ENCODE measurements at regions of chr17 and their contacts with region 1.

Region 1: DNA sequence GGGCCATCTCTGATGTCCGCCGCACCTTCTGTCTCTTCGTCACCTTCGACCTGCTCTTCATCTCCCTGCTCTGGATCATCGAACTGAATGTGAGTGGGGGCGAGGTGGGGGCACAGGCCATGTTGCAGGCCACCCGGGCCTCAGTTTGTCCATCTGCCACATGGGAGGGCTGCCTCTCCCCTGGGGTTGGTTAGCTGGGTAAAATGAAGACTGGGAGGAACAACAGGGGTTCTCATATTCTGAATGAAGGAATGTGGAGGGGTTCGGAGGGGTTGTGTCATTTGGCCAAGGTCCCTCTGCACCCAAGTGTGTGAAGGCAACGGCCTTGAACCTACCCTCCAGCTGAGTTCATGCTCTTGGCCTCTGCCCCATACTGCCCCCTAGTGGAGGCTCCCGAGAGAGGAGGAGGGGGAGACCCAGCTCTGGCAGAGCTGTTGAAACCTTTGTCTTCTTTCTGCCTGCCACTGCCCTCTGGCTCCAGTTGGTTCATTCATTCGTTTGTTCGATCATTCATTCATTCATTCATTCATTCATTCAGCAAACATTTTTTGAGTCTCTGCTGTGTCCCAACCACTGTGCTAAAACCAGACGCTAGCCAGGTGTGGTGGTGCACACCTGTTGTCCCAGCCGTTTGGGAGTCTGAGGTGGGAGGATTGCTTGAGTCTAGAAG is 11.4 kb upstream of the TCAP start:
- DNase-seq: peak; percentile 87
- ATAC-seq: peak; percentile 89
- H3K4me3 Mint-ChIP-seq: no peak overlapping the region
- H3K27ac Mint-ChIP-seq: peak overlapping the region; percentile 24
- H3K4me1 Mint-ChIP-seq: peaks cover 12% of the 10 kb centered on the region
- H3K27me3 Mint-ChIP-seq: no peaks in the 10 kb centered on the region

Region 2: DNA sequence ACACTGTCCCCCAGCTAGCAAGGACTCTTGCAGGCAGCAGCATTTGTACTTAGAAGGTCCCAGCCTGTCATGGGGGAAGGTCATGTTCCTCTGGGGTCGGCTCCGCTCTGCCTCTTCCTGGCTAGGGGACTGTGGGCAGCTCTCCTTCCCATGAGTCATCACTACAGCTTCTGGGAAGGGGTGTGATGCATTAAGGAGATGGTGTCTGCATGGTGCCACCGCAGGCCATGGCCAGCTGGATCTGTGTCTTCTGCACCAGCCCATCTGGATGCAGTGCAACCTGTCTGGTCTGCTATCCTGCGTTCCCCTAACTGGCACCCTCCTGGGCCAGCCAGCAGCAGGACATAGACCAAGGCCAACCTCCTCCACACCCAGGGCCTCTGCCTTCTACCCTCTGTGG is 10.5 kb before region 1 on chr17:
- CTCF ChIA-PET with region 1: interaction called, 50 read pairs
- DNase-seq: no peak
- ATAC-seq: no peak
- H3K4me3 Mint-ChIP-seq: no peak overlapping the region
- H3K27ac Mint-ChIP-seq: no peak overlapping the region
- H3K4me1 Mint-ChIP-seq: peaks cover 37% of the 10 kb centered on the region
- H3K27me3 Mint-ChIP-seq: no peaks in the 10 kb centered on the region

Region 3: GRCh38 chr17:39668199-39668966 is 14.6 kb after region 1 on chr17 and contains the start of gene PNMT:
- CTCF ChIA-PET with region 1: interaction called, 98 read pairs
- DNase-seq: peak; percentile 74
- ATAC-seq: peak; percentile 85
- H3K4me3 Mint-ChIP-seq: peak within 1 kb of the TSS; percentile 30
- H3K27ac Mint-ChIP-seq: no peak within 1 kb of the TSS
- H3K4me1 Mint-ChIP-seq: peaks cover 11% of the 10 kb centered on the region
- H3K27me3 Mint-ChIP-seq: peaks cover 30% of the 10 kb centered on the region
- total RNA-seq, gene PNMT: not detected

Region 4: GRCh38 chr17:39676198-39676819 is 22.5 kb after region 1 on chr17:
- CTCF ChIA-PET with region 1: interaction called, 98 read pairs
- DNase-seq: peak; percentile 81
- ATAC-seq: peak; percentile 85
- H3K4me3 Mint-ChIP-seq: no peak overlapping the region
- H3K27ac Mint-ChIP-seq: peak overlapping the region; percentile 79
- H3K4me1 Mint-ChIP-seq: peaks cover 56% of the 10 kb centered on the region
- H3K27me3 Mint-ChIP-seq: peaks cover 2% of the 10 kb centered on the region

Region 5: GRCh38 chr17:39687811-39688518 is 34.2 kb after region 1 on chr17 and contains the start of gene PGAP3:
- CTCF ChIA-PET with region 1: interaction called, 13 read pairs
- DNase-seq: peak; percentile 93
- ATAC-seq: peak; percentile 94
- H3K4me3 Mint-ChIP-seq: peak within 1 kb of the TSS; percentile 91
- H3K27ac Mint-ChIP-seq: peak within 1 kb of the TSS; percentile 92
- H3K4me1 Mint-ChIP-seq: peaks cover 18% of the 10 kb centered on the region
- H3K27me3 Mint-ChIP-seq: no peaks in the 10 kb centered on the region
- total RNA-seq, gene PGAP3: 10.5 to 13.8 TPM

Region 6: DNA sequence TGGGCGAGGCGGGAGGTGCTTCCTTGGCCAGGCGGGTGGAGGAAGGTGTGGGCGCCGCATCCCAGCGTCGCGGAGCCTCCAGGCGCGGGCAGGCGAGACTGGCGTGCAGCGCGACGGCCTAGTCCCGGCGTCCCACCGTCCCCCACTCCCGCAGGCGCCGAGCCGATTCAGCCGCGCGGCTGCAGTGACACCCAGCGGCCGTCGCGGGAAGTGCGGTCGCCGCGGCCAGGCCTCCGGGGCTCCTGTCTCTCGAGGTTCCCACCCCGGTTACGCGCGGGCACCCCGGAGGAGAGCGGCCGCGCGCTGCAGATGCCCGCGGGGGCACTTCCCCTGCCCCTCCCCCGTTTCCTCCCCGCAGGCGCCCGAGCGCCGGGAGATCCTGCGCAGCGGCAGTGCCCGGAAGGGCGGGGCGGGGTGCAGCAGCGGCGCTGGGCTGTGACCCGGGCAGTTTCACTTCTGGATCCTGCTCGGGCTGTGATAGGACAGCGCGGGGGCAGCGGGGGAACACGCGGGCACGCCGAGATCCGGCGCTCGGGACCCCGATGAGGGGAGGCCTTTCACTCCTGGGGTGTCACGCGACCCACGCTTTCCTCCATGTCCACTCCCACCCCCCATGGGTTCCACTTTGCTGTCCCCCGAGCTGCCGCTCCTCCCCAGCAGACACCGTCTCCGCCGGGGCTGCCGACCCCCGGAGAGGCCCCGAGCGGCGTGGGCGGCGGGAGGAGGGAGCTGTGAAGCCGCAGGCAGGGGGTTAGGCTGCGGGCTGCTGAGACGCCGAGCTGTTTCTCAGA is 100.6 kb after region 1 on chr17:
- CTCF ChIA-PET with region 1: interaction called, 11 read pairs
- DNase-seq: peak; percentile 98
- ATAC-seq: peak; percentile 87
- H3K4me3 Mint-ChIP-seq: peak overlapping the region; percentile 78
- H3K27ac Mint-ChIP-seq: peak overlapping the region; percentile 91
- H3K4me1 Mint-ChIP-seq: peaks cover 62% of the 10 kb centered on the region
- H3K27me3 Mint-ChIP-seq: no peaks in the 10 kb centered on the region